Naive thymus-derived CD4-positive, alpha-beta T cell (primary cell): ENCODE measurements at regions of chr21 and their contacts with region 1.

Region 1: GRCh38 chr21:37087188-37087587 is 14.1 kb downstream of the TTC3 start:
- DNase-seq: peak in 3 of 9 donors; percentile 2 to 20 (median 11)
- ATAC-seq: peak; percentile 47
- H3K4me3 ChIP-seq: no peak overlapping the region
- H3K4me3 Mint-ChIP-seq: no peak overlapping the region
- H3K27ac ChIP-seq: no peak overlapping the region
- H3K27ac Mint-ChIP-seq: no peak overlapping the region
- H3K4me1 ChIP-seq: peaks cover 3 to 14% of the 10 kb centered on the region in 2 donors
- H3K4me1 Mint-ChIP-seq: peaks cover 4 to 34% (median 23%) of the 10 kb centered on the region in 7 donors
- H3K27me3 ChIP-seq: no peaks in the 10 kb centered on the region
- H3K27me3 Mint-ChIP-seq: no peaks in the 10 kb centered on the region

Region 2: GRCh38 chr21:35342440-35342839 is 1744.7 kb before region 1 on chr21:
- CTCF ChIA-PET with region 1: no interaction called
- POLR2A ChIA-PET with region 1: no interaction called
- intact Hi-C with region 1: no loop called
- DNase-seq: no peak
- ATAC-seq: peak; percentile 20
- H3K4me3 ChIP-seq: peak overlapping the region; percentile 24
- H3K4me3 Mint-ChIP-seq: peak overlapping the region in 5 of 10 donors; percentile 8 to 82 (median 22)
- H3K27ac ChIP-seq: no peak overlapping the region
- H3K27ac Mint-ChIP-seq: peak overlapping the region in 2 of 9 donors; percentile 15 to 62
- H3K4me1 ChIP-seq: no peaks in the 10 kb centered on the region
- H3K4me1 Mint-ChIP-seq: peaks cover 0 to 22% (median 5%) of the 10 kb centered on the region in 7 donors
- H3K27me3 ChIP-seq: no peaks in the 10 kb centered on the region
- H3K27me3 Mint-ChIP-seq: peaks cover 0 to 12% (median 0%) of the 10 kb centered on the region in 5 donors

Region 3: DNA sequence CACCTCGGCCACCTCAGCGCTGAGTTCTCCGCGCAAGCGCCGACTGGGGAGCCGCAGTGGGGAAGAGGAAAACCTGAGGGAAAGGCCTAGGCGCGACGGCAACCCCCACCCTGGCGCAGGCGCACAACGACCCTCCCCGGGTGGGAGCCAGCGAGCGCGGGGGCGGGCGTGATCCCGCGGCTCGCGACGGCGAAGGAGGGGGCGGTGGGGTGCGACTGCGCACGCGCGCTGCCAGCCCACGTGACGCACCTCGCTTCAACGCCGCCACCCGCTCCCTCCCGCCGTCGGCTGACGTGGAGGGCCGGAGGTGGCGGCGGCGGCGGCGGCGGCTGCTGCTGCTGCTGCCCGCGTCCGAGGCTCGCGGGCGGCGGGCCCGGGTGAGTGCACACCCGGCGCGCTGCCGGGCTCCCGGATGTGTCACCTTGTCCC is 14.2 kb before region 1 on chr21 and contains the starts of genes PIGP and TTC3:
- CTCF ChIA-PET with region 1: interaction called, 4 read pairs
- POLR2A ChIA-PET with region 1: interaction called, 4 read pairs
- intact Hi-C with region 1: loop called in 1 of 2 experiments (anchors 2 kb)
- DNase-seq: peak; percentile 93 to 99 (median 97)
- ATAC-seq: peak; percentile 79
- H3K4me3 ChIP-seq: peak within 1 kb of the TSS; percentile 76
- H3K4me3 Mint-ChIP-seq: peak within 1 kb of the TSS; percentile 88 to 100 (median 98)
- H3K27ac ChIP-seq: peak within 1 kb of the TSS; percentile 97
- H3K27ac Mint-ChIP-seq: peak within 1 kb of the TSS; percentile 91 to 100 (median 97)
- H3K4me1 ChIP-seq: peaks cover 22 to 23% of the 10 kb centered on the region in 2 donors
- H3K4me1 Mint-ChIP-seq: peaks cover 30 to 66% (median 59%) of the 10 kb centered on the region in 7 donors
- H3K27me3 ChIP-seq: no peaks in the 10 kb centered on the region
- H3K27me3 Mint-ChIP-seq: peaks cover 0 to 6% (median 0%) of the 10 kb centered on the region in 5 donors
- total RNA-seq, gene PIGP: 9.1 to 26.7 (median 15.3) TPM
- total RNA-seq, gene TTC3: 66.6 to 208 (median 154) TPM

Region 4: GRCh38 chr21:37338671-37339551 is 251.7 kb after region 1 on chr21:
- CTCF ChIA-PET with region 1: no interaction called
- POLR2A ChIA-PET with region 1: no interaction called
- intact Hi-C with region 1: no loop called
- DNase-seq: no peak
- ATAC-seq: no peak
- H3K4me3 ChIP-seq: no peak overlapping the region
- H3K4me3 Mint-ChIP-seq: no peak overlapping the region
- H3K27ac ChIP-seq: no peak overlapping the region
- H3K27ac Mint-ChIP-seq: no peak overlapping the region
- H3K4me1 ChIP-seq: no peaks in the 10 kb centered on the region
- H3K4me1 Mint-ChIP-seq: peaks cover 0 to 8% (median 0%) of the 10 kb centered on the region in 7 donors
- H3K27me3 ChIP-seq: no peaks in the 10 kb centered on the region
- H3K27me3 Mint-ChIP-seq: peaks cover 0 to 4% (median 2%) of the 10 kb centered on the region in 5 donors